Colonic mucosa (tissue), 4 donors: ENCODE measurements at regions of chr13 and their contacts with region 1.

Region 1: GRCh38 chr13:87274209-87274819 is 396.9 kb upstream of the SLITRK5 start:
- DNase-seq: peak; percentile 21
- H3K4me3 ChIP-seq: no peak overlapping the region
- H3K27ac ChIP-seq: no peak overlapping the region
- H3K4me1 ChIP-seq: no peaks in the 10 kb centered on the region
- H3K27me3 ChIP-seq: no peaks in the 10 kb centered on the region
- CTCF ChIP-seq: peak; percentile 28

Region 2: DNA sequence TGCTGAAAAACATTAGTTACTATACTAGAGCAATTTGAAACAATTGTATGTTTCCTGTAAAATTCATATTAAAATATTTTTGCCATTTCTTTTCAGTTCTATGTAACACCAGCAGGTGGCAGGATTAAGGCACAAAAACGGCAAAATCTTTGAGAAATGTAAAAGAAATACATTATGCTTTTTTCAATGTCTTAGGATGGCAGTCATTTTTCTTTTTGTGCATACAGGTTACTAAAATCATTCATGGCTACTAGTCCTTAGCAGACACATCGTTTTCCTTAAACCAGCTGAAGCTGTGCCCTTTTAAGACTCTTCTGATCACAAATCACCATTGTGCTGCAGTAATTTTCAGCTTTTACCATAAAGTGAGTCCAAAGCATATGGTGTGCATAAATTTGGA is 403.9 kb before region 1 on chr13:
- intact Hi-C with region 1: loop called (anchors 5 kb)
- DNase-seq: no peak
- H3K4me3 ChIP-seq: no peak overlapping the region
- H3K27ac ChIP-seq: no peak overlapping the region
- H3K4me1 ChIP-seq: no peaks in the 10 kb centered on the region
- H3K27me3 ChIP-seq: no peaks in the 10 kb centered on the region
- CTCF ChIP-seq: peak; percentile 48